SK-N-SH (cell line): ENCODE measurements at regions of chr9 and their contacts with region 1.

Region 1: GRCh38 chr9:84953797-84954705 is 284.5 kb downstream of the NTRK2 start:
- DNase-seq: peak; percentile 85
- H3K4me3 ChIP-seq: peak overlapping the region in 1 of 2 experiments; percentile 23; a peak in 1 of 4 replicates
- H3K27ac ChIP-seq: no peak overlapping the region
- H3K4me1 ChIP-seq: no peaks in the 10 kb centered on the region; a peak in 1 of 4 replicates
- H3K27me3 ChIP-seq: no peaks in the 10 kb centered on the region
- CTCF ChIP-seq: peak; percentile 93
- EP300 ChIP-seq: no peak
- RAD21 ChIP-seq: peak; percentile 86

Region 2: GRCh38 chr9:84917366-84918063 is 36.5 kb before region 1 on chr9:
- CTCF ChIA-PET with region 1: no interaction called
- POLR2A ChIA-PET with region 1: no interaction called
- DNase-seq: no peak
- H3K4me3 ChIP-seq: no peak overlapping the region
- H3K27ac ChIP-seq: no peak overlapping the region
- H3K4me1 ChIP-seq: no peaks in the 10 kb centered on the region
- H3K27me3 ChIP-seq: no peaks in the 10 kb centered on the region; the same call in 1 of the 2 replicates
- CTCF ChIP-seq: no peak
- EP300 ChIP-seq: no peak
- RAD21 ChIP-seq: no peak

Region 3: DNA sequence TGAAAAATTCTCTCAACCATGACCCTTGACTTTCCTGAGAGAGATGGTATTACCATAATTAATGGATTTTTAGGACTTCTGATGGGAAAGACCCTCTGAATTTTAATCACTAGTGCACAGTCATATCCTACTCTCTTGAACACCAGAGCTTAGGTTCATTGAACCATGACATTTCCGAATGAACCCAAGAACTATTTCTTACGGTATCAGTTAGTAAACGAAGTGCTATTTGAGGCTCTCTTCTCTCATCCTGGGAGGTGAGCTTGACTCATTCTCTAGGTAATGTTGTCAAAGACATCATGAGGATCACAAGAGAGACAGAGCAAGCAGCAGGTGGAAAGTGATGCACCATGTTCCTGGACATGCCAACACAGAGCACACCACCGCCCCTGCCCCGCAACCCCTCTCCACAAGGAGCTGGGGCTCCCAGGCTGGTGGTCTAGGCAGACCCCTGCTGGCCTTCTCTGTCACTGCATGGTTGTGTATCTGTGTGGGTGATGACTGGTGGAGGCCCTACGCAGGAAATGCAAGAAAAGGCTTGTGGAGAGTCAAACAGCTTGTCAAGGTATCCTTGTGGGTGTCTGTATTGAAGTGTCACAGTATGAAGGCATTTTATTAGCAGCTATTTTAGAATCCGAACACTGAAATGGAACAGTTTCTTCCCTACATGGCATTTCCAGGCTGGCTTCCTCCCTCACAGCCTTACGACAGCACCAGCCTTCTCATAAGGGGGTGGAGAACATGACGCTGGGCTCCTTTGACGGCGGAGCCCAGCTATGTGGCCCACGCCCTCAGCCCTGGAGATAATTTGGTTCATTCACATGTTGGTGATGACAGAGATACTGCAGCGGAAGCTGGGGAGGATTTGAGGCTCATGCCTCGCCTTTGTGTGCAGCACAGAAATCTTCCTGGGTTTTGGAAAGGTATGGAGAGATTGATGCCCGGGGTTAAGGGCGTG is 13.1 kb after region 1 on chr9:
- CTCF ChIA-PET with region 1: interaction called, 18 read pairs
- POLR2A ChIA-PET with region 1: no interaction called
- DNase-seq: no peak
- H3K4me3 ChIP-seq: no peak overlapping the region
- H3K27ac ChIP-seq: no peak overlapping the region
- H3K4me1 ChIP-seq: no peaks in the 10 kb centered on the region
- H3K27me3 ChIP-seq: no peaks in the 10 kb centered on the region
- CTCF ChIP-seq: peak; percentile 12; the same call in 1 of the 2 replicates
- EP300 ChIP-seq: no peak
- RAD21 ChIP-seq: peak; percentile 25; the same call in 1 of the 2 replicates

Region 4: DNA sequence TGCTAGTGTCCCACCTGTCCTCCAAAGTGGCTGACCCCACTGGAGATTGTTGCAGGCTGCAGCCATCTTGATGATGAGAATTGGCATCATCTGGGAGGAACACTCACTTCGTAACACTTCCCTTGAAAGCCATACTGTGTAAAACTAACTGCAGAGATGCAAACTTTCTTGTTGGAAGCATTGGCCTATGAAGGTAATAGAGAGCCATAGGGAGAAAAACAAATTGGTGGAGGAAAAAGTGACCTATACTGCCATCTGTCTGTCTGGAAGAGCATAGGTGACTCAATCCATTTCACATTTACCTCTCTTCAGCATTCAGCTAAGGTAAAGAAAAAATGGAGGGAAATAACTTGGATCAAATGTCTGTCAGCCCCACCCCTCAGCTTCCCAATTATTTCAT is 188.9 kb after region 1 on chr9:
- CTCF ChIA-PET with region 1: interaction called, 11 read pairs
- POLR2A ChIA-PET with region 1: no interaction called
- DNase-seq: peak; percentile 20
- H3K4me3 ChIP-seq: no peak overlapping the region
- H3K27ac ChIP-seq: no peak overlapping the region
- H3K4me1 ChIP-seq: no peaks in the 10 kb centered on the region; a peak in 1 of 4 replicates
- H3K27me3 ChIP-seq: no peaks in the 10 kb centered on the region
- CTCF ChIP-seq: peak; percentile 54
- EP300 ChIP-seq: no peak
- RAD21 ChIP-seq: peak; percentile 72

Region 5: DNA sequence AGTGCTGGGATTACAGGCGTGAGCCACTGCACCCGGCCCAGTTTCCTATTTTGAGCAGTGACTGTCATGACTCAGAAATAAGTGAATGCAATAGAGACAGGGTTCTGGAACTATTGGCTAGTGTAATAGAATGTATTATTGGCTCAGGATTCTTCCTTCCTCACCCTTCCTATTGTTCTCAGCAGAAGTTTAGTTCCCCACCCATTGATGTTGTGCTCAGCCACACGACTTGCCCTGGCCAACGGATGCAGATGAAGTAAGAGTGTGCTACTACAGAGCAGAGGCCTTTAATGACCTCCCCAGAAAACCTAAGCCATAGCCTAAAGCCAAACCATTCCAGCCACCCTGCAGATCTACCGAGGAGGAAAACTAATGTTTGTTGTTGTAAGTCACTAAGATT is 499.8 kb after region 1 on chr9:
- CTCF ChIA-PET with region 1: no interaction called
- POLR2A ChIA-PET with region 1: no interaction called
- DNase-seq: no peak
- H3K4me3 ChIP-seq: no peak overlapping the region
- H3K27ac ChIP-seq: no peak overlapping the region
- H3K4me1 ChIP-seq: no peaks in the 10 kb centered on the region
- H3K27me3 ChIP-seq: no peaks in the 10 kb centered on the region
- CTCF ChIP-seq: no peak
- EP300 ChIP-seq: no peak
- RAD21 ChIP-seq: no peak